Mucosa of descending colon (tissue), 3 donors: ENCODE measurements at regions of chr3 and their contacts with region 1.

Region 1: DNA sequence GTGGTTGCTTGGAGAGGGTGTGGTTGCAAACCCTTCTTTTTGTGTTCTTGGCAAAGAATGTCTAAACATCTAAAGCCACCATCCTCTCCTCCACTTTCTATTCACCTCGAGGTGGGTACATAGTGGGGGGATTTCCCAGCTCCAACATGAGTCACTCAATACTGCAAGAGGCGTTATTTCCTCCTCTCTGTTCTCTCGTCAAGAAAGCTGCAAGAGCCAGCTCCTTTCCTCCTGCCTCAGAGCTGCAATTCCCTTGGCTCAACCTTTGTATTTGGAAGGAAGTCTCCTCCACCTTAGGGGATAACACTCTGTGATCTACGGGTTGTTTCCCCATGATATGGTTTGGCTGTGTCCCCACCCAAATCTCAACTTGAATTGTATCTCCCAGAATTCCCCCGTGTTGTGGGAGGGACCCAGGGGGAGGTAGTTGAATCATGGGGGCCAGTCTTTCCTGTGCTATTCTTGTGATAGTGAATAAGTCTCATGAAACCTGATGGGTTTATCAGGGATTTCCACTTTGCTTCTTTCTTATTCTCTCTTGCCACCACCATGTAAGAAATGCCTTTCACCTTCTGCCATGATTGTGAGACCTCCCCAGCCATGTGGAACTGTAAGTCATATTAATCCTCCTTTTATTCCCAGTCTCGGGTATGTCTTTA is 138.4 kb downstream of the PLCL2 start:
- DNase-seq: no peak
- ATAC-seq: peak; percentile 44
- H3K4me3 ChIP-seq: no peak overlapping the region
- H3K4me1 ChIP-seq: no peaks in the 10 kb centered on the region
- CTCF ChIP-seq: no peak

Region 2: DNA sequence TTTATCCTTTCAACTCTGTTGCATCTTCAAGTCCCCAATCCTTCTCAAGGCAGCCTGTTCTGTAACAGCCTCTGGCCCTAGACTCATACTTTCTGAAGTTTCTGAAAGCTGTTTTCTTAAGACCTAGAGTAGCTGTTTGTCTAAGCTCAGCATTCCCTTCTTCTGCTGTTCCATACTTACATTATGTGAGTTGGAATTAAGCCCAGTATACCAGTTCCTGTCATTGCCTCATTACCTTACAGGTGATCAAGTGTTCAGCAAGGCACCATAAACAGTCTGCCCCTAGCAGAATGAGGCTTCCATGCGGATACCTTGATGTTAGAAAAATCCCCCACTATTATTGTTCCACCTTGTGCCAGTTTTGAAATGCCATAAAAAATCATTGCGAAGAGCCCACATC is 42.2 kb after region 1 on chr3:
- intact Hi-C with region 1: loop called in 1 of 2 experiments (anchors 2 kb)
- DNase-seq: no peak
- ATAC-seq: peak; percentile 73
- H3K4me3 ChIP-seq: no peak overlapping the region
- H3K4me1 ChIP-seq: no peaks in the 10 kb centered on the region
- CTCF ChIP-seq: no peak